ENCODE measurements at regions of chr1 and their contacts with region 1.

Region 1: DNA sequence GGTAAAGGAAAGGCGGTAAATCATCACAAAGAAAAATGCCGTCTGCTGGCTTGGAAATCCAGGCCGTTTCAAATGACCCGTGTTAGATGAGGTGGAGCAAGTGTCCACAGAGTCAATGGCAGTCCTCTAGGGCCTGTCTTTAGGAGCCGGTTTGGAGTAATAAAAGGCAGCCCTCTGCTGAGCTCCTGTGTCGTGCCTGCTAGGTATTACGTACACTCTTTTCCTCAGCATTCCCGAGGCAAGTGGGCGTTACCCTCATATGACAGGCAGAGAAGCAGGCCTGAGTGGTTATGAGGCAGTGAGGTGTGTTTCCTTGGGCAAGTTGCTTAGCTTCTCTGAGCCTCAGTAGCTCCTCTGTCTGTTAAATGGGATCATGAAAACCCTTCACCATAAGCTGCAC is 7.7 kb downstream of the NENF start:
- DNase-seq: no peak
- ATAC-seq: no peak
- H3K4me3 ChIP-seq: no peak overlapping the region
- H3K27ac ChIP-seq: no peak overlapping the region
- H3K4me1 ChIP-seq: peaks cover 0 to 18% (median 4%) of the 10 kb centered on the region in 12 donors
- H3K27me3 ChIP-seq: no peaks in the 10 kb centered on the region
- CTCF ChIP-seq: no peak
- POLR2A ChIP-seq: no peak

Region 2: DNA sequence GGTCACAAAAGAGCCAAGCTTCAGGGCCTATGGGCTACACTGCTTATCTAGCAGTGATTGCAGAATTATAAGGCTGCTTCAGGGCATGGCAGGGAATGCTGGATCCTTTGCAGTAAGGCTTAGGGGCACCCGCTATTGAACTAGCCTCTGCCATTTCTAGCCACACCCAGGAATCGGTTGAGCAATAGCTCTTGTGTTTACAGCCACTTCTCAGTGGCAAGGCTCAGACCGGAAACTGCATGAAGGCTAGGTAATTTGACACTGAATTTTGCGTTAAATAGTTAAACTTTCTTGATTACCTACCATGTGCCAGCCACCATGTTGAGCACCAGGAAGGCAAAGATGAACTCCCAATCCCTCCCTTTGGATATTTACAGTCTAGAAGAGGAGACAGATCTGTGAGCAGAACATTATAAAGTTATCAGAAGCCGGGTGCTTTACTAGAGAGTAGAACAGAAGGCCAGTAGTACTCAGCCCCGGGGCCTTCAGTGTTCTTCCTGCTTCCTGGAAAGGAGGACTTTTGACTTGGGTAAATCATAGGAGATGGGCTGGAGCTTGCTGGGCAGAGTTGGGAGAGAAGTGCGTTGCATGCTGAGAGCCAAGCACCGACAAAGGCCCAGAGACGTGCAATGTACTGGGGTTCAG is 511.3 kb before region 1 on chr1:
- intact Hi-C with region 1: no loop called
- DNase-seq: no peak
- ATAC-seq: peak in 1 of 4 donors; percentile 30
- H3K4me3 ChIP-seq: no peak overlapping the region
- H3K27ac ChIP-seq: peak overlapping the region in 1 of 12 donors; percentile 72
- H3K4me1 ChIP-seq: peaks cover 0 to 42% (median 1%) of the 10 kb centered on the region in 12 donors
- H3K27me3 ChIP-seq: peaks cover 0 to 3% (median 0%) of the 10 kb centered on the region in 9 donors
- CTCF ChIP-seq: no peak
- POLR2A ChIP-seq: no peak

Region 3: DNA sequence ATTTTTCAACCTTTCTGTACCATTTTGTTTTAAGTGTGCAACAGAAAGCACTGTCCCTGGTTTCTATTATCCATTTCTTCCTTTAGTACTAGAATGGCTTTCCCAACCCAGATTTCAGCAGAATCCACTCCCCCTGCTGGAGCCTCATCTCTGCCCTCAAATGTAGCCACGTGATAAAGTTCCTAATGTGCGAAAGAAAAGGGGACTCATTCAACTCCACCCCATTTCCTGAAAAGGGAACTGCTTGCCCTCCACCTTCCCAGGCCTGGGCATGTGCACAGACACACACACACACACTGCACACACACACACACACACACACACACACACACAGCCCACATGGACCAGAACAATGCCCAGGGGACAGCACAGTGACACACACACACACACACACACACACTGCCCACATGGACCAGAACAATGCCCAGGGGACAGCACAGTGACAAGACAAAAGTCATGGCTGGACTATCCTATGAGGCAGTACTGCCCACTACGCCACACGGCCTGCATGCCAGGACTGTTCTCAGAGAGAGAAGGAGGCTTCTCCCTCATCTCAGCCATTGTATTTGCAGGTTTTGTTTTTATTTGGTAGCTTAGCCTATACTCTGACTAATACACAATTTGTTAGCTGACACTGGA is 58.9 kb before region 1 on chr1:
- intact Hi-C with region 1: loop called in 1 of 10 experiments (anchors 5 kb)
- DNase-seq: no peak
- ATAC-seq: no peak
- H3K4me3 ChIP-seq: no peak overlapping the region
- H3K27ac ChIP-seq: no peak overlapping the region
- H3K4me1 ChIP-seq: no peaks in the 10 kb centered on the region
- H3K27me3 ChIP-seq: no peaks in the 10 kb centered on the region
- CTCF ChIP-seq: no peak
- POLR2A ChIP-seq: no peak